PC-9 (cell line): ENCODE measurements at regions of chr12 and their contacts with region 1.

Region 1: DNA sequence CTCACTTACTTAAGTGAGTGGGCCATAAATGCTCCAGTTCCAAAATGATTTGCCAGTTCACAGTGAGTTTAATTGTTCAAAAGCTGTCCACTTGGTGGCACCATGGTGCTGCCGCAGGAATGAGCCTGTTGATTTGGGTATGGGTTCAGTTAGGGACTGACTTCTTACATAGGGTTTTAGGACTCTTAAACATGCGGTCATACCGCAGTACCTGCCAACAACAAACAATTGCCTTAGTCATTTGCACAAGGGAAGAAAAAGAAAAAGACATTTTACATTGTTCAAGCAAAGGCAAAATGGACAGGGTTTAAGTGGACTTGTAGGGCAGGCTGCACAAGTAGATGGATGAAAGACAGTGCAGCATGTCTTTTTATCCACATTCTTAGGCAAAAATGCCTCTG is 80.0 kb upstream of the DBX2 start:
- DNase-seq: peak; percentile 68 to 79
- H3K4me3 ChIP-seq: no peak overlapping the region
- H3K27ac ChIP-seq: no peak overlapping the region
- H3K4me1 ChIP-seq: peaks cover 6% of the 10 kb centered on the region
- H3K27me3 ChIP-seq: no peaks in the 10 kb centered on the region
- CTCF ChIP-seq: peak; percentile 88

Region 2: GRCh38 chr12:45268672-45269411 is 138.0 kb after region 1 on chr12:
- CTCF ChIA-PET with region 1: no interaction called
- POLR2A ChIA-PET with region 1: no interaction called
- intact Hi-C with region 1: no loop called
- DNase-seq: peak; percentile 77 to 91
- H3K4me3 ChIP-seq: peak overlapping the region; percentile 30; the same call in 1 of the 2 replicates
- H3K27ac ChIP-seq: peak overlapping the region; percentile 94
- H3K4me1 ChIP-seq: peaks cover 67% of the 10 kb centered on the region
- H3K27me3 ChIP-seq: no peaks in the 10 kb centered on the region
- CTCF ChIP-seq: peak; percentile 70

Region 3: DNA sequence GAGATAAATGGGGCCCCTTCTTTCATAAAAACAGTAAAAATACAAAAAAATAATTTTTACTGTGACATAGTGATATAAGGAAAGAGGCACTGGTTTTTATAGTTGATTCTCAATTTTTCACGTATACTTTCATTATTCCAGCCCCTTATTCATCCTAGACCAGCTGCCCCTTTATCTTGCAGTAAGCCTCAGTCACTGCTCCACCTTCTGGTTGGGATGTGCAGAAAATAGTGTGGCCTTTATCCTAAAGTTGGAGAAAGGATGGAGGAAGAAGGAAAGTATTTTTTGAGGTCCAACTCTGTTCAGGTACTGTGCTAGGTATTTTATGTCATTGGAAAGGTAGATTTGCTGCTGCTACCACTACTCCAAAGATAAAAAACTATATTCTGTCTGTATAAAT is 257.7 kb after region 1 on chr12:
- CTCF ChIA-PET with region 1: no interaction called
- POLR2A ChIA-PET with region 1: no interaction called
- intact Hi-C with region 1: loop called (anchors 1 kb)
- DNase-seq: no peak
- H3K4me3 ChIP-seq: no peak overlapping the region
- H3K27ac ChIP-seq: no peak overlapping the region
- H3K4me1 ChIP-seq: no peaks in the 10 kb centered on the region
- H3K27me3 ChIP-seq: no peaks in the 10 kb centered on the region
- CTCF ChIP-seq: peak; percentile 60